Posterior cingulate gyrus (tissue), 11 donors: ENCODE measurements at regions of chr3 and their contacts with region 1.

Region 1: GRCh38 chr3:12891985-12892839 is 50.8 kb upstream of the RPL32 start:
- DNase-seq: peak in 8 of 10 donors; percentile 35 to 90 (median 52)

Region 2: DNA sequence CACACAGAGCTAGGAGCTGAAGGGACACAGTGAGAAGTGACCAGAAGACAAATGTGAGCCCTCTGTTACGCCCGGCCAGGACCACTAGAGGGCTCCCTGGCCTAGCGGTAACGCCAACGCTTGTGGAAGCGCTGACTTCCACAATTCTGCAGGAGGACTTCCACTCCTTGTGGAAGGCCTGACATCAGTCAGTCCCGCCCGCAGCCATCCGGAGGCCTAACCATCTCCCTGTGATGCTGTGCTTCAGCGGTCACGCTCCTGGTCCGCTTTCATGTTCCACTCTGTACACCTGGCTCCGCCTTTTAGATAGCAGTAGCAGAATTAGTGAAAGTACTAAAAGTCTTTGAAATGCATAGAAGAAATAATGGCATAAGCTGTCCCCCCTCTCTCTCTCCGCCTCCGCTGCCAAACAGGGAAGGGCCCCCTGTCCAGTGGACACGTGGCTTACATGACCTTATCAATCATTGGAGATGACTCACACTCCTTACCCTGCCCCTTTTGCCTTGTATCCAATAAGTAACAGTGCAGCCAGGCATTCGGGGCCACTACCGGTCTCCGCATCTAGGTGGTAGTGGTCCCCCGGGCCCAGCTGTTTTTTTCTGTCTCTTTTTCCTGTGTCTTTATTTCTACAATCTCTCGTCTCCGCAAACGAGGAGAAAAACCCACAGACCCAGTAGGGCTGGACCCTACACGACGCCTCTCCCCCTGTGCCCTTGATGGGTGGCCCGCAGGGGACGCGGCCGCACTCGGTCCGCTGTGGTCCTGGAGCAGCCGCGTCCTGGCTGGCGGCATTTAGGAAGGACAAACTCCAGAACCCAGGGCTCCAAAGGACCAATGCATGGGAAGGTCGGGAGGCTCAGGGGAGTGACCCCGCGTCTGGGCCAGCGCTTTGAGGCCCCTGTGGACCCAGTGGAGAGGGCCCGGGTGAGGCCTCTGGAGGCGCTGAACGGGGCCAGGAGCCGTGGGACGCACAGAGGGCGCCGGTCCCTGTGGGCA is 23.9 kb before region 1 on chr3:
- intact Hi-C with region 1: loop called (anchors 1 kb)
- DNase-seq: peak; percentile 72 to 98 (median 86)

Region 3: GRCh38 chr3:12994607-12995388 is 102.6 kb after region 1 on chr3:
- intact Hi-C with region 1: loop called (anchors 5 kb)
- DNase-seq: peak; percentile 75 to 98 (median 86)

Region 4: DNA sequence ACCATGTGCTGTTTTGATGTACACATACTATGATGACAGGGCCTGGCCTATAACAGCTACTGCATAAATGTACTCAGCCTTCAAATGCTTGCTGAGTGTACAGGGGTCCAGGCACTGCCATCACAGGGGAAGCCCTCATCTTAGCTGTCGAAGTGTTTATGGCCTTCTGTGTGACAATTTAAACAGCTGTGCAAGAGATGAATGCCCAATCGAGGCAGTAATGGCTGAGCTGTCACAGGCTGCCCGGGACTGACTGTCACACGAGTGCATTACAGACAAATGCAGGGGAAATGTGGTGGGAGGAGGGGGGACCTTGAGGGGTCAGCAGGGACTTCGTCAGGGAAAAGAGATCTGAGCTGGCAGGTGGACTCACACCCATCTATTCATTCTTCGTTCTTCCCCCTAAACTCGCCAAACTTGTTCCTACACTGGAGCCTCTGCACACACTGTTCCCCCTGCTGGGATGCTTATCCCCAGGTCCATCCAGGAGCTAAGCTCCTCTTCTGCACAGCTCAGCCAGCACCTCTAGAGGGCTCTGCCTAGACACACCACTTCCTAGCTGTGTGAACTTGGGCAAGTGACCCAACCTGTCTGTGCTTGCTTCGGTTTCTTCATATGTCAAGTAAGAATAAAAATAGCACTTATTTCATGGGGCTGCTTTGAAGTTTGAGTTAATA is 337.2 kb after region 1 on chr3:
- intact Hi-C with region 1: no loop called
- DNase-seq: peak in 2 of 10 donors; percentile 8 to 52